Endothelial cell of umbilical vein (primary cell): ENCODE measurements at regions of chr16 and their contacts with region 1.

Region 1: DNA sequence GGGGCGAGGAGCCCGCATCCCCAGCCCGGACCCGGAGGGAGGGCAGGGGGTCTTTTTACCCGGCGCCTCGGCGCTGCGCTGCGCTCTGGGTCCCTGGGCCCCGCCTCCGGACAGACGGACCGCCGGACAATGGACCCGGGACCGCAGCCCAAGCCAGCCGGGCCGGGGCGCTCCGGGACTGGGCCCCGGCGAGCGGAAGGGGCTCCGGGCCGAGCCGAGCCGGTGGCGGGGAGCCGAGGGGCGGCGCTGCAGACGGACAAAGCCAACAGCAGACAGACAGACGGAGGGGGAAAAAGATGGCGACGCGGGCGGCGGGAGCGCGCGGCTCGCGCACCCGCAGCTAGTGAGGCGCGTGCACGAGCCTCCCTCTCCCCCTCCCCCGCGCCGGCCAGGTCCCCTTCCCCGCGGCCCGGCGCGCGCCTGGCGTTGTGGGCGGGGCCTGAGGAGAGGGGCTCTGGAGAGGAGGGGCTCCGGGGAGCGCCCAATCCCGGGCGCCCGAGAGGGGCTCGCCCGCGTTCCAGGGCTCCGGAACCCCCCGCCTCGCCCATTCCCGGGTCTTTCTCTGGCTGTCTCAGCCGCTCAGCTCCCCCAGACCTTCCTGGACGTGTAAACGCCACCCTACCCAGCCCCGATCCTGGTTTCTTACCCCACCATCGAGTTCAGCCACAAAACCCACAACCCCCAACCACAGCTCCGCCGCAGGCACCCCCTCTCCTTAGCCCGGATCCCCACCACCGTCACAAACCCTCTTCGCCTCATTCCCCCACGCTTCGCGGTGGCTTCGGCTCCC is at the start of gene ZNF821:
- DNase-seq: peak; percentile 72
- H3K4me3 ChIP-seq: peak within 1 kb of the TSS; percentile 45 to 97 (median 90)
- H3K27ac ChIP-seq: peak within 1 kb of the TSS; percentile 62
- H3K4me1 ChIP-seq: peaks cover 24% of the 10 kb centered on the region
- H3K27me3 ChIP-seq: no peaks in the 10 kb centered on the region
- CTCF ChIP-seq: peak; percentile 28 to 58
- POLR2A ChIP-seq: peak; percentile 56
- total RNA-seq, gene ZNF821: 7.3 and 9.6 TPM in 2 replicates

Region 2: DNA sequence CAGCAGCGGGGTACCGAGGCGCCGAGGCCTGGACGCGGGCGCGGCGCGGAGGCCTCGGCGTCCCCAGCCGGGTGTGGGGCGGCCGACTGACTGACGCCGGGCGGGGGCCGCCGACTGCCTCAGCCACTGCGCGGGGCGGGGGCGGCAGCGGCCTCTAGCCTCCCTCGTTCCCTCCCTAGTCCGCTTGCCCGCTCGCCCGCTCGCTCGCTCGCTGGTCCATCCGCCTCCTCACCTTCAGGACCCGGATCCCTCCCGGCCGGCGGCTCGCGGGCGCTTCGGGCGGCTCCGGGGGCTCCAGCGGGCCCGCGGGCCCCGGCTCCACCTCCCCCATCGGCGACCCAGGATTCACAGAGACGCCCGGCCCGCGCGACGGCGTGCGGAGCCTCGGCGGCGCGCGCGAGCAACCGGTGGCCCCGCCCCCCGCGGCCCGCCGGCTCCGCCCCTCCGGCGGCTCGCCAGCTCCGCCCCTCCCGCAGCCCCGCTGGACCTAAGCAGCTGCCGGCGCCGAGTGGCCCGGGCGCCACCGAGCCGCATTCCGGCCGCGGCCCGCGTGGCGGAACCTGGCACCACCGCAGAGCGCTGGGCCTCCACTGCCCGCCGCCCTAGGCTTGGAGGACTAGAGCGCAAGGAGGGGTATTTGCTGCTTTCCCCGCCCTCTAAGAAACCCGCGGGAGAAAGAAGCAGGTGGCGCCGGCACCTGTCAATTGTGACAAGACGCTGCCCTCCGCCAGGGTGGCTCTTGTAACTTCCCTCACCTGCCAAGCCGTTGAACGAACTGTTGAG is 160.3 kb before region 1 on chr16:
- CTCF ChIA-PET with region 1: interaction called, 8 read pairs
- POLR2A ChIA-PET with region 1: no interaction called
- dilution Hi-C with region 1: no loop called
- intact Hi-C with region 1: loop called (anchors 5 kb)
- DNase-seq: peak; percentile 75
- H3K4me3 ChIP-seq: peak overlapping the region; percentile 72 to 87 (median 74)
- H3K27ac ChIP-seq: peak overlapping the region; percentile 70
- H3K4me1 ChIP-seq: peaks cover 13% of the 10 kb centered on the region
- H3K27me3 ChIP-seq: no peaks in the 10 kb centered on the region
- CTCF ChIP-seq: no peak
- POLR2A ChIP-seq: peak; percentile 52

Region 3: GRCh38 chr16:71845639-71846430 is 38.2 kb before region 1 on chr16 and contains the start of gene ATXN1L:
- CTCF ChIA-PET with region 1: interaction called, 6 read pairs
- POLR2A ChIA-PET with region 1: no interaction called
- dilution Hi-C with region 1: no loop called
- intact Hi-C with region 1: loop called (anchors 1 kb)
- DNase-seq: peak; percentile 71
- H3K4me3 ChIP-seq: peak within 1 kb of the TSS; percentile 70 to 91 (median 83)
- H3K27ac ChIP-seq: peak within 1 kb of the TSS; percentile 88
- H3K4me1 ChIP-seq: peaks cover 12% of the 10 kb centered on the region
- H3K27me3 ChIP-seq: no peaks in the 10 kb centered on the region
- CTCF ChIP-seq: no peak
- POLR2A ChIP-seq: peak; percentile 93
- total RNA-seq, gene ATXN1L: 23.9 and 24.9 TPM in 2 replicates

Region 4: DNA sequence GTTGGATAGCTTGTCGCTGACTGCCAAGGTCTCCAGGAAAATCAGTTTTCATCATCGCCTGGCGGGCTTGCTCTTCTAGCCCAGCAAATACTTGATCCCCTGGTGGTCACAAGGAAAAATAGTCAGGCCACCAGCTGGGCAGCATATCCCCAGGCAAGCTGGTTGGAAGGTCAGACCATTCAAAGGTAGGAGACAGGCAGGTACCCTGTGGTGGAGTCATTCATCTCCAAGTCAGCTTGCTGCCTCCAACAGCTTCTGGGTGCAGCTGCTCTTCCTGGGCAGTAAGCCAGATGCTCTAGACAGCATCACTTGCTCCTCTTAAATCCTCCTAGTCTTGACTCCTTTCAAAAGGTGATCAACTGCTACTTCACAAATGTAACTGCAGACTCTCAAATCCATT is 16.1 kb before region 1 on chr16:
- CTCF ChIA-PET with region 1: interaction called, 50 read pairs
- POLR2A ChIA-PET with region 1: no interaction called
- dilution Hi-C with region 1: no loop called
- intact Hi-C with region 1: no loop called
- DNase-seq: no peak
- H3K4me3 ChIP-seq: no peak overlapping the region
- H3K27ac ChIP-seq: no peak overlapping the region
- H3K4me1 ChIP-seq: no peaks in the 10 kb centered on the region
- H3K27me3 ChIP-seq: no peaks in the 10 kb centered on the region
- CTCF ChIP-seq: no peak
- POLR2A ChIP-seq: no peak

Region 5: DNA sequence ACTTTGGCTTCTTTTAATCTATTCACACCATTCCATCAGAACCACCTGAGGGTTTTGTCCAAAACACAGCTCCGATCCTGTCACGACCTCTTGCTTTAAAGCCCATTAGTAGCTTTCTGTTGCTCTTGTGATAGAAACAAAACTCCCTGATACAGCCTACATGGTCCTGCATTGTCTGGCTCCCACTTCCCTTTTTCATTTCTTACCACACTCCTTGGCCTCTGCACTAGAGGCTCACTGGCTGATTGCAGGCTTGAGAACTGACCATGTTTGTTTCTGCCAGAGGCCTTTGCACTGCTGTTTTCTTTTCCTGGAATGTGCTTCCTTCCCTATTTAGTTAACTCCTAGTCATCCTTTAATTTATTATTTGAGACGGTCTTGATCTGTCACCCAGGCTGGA is 35.0 kb after region 1 on chr16:
- CTCF ChIA-PET with region 1: interaction called, 17 read pairs
- POLR2A ChIA-PET with region 1: no interaction called
- dilution Hi-C with region 1: no loop called
- intact Hi-C with region 1: no loop called
- DNase-seq: no peak
- H3K4me3 ChIP-seq: no peak overlapping the region
- H3K27ac ChIP-seq: no peak overlapping the region
- H3K4me1 ChIP-seq: peaks cover 31% of the 10 kb centered on the region
- H3K27me3 ChIP-seq: no peaks in the 10 kb centered on the region
- CTCF ChIP-seq: no peak
- POLR2A ChIP-seq: no peak

Region 6: DNA sequence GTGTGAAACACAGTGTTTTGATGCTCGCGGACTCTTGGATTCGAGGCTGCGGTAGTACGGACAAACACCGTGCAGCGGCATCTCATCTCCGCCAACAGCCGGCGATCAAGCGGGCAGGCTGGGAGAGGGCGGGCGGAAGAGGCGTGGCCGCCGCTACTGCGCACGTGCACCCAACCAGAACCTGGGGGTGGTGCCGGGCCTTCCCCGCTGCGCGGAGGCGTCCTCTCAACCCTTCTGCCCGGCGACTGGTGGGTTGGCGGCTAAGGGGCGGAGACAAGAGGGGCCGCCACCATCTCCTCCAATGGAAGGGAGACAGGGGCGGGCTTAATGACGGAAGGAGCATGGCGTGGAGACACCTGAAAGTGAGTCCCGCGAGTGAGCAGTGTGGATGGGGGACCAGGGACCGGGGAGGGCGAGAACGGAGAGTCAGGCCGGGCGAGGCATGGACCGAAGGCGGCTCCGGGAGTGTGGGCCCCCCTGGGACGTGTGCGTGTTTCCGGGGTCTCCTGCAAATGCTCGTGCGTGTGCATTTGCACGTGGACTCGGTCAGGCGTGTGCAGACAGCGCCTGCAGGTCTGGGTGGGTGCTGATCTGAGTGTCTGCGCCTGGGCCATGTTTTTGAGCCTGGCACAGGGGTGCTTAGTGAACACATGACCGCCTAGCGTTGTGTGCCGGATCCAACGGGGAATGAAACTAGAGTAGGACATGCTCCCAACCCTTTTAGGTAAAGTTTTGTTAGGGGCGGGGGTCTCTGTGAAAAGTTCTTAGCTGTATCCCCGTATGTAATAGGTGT is 124.6 kb after region 1 on chr16 and contains the start of gene DHODH:
- CTCF ChIA-PET with region 1: no interaction called
- POLR2A ChIA-PET with region 1: no interaction called
- dilution Hi-C with region 1: no loop called
- intact Hi-C with region 1: loop called (anchors 1 kb)
- DNase-seq: peak; percentile 99
- H3K4me3 ChIP-seq: peak within 1 kb of the TSS; percentile 22 to 73 (median 47)
- H3K27ac ChIP-seq: no peak within 1 kb of the TSS
- H3K4me1 ChIP-seq: peaks cover 2% of the 10 kb centered on the region
- H3K27me3 ChIP-seq: no peaks in the 10 kb centered on the region
- CTCF ChIP-seq: peak in 1 of 2 donors; percentile 1
- POLR2A ChIP-seq: peak; percentile 84
- total RNA-seq, gene DHODH: 9.2 and 9.7 TPM in 2 replicates